GM10248 (cell line): ENCODE measurements at regions of chr17 and their contacts with region 1.

Region 1: DNA sequence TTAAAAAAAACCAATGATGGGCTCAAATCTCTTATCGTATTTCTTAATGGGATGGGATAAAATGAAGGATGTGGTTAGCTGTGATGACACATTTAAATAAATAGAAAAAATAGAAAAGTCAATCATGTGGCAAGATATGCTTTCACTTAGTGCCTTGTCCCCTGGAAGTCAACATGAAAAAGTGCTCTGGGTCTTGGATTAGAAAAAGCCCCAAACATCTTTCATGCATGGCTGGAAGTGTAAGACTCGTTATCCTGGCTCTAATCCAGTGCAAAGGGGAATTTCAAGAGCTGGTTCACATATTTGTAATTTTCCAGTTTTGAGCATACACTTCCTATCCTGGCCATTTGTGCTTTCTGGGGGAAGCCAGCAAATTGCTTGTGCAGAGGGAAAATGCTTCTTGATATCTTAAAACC is 160.9 kb downstream of the MAP2K6 start:
- DNase-seq: no peak
- CTCF ChIP-seq: no peak

Region 2: GRCh38 chr17:69560987-69561441 is 14.3 kb before region 1 on chr17:
- CTCF ChIA-PET with region 1: interaction called, 36 read pairs
- POLR2A ChIA-PET with region 1: no interaction called
- DNase-seq: no peak
- CTCF ChIP-seq: no peak

Region 3: DNA sequence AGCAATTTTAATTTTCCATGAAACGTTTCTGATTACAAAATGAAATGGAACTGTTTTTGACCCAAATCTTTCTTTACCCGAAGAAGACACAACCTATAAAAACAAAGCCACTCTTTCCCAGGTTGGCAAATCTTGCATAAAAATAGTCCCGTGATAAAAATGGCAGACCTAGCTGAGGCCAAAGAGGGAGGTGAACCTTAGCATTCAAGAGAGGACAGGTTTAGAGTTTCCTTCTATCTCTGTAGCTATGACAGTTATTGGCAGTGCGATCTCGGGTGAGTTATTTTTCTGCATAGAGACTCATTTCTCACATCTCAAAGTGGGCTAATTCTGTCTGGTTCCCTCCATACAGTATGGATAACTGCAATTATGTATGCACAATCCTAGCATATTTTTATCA is 80.5 kb after region 1 on chr17:
- CTCF ChIA-PET with region 1: no interaction called
- POLR2A ChIA-PET with region 1: no interaction called
- DNase-seq: no peak
- CTCF ChIP-seq: no peak

Region 4: GRCh38 chr17:70552230-70552981 is 977.1 kb after region 1 on chr17:
- CTCF ChIA-PET with region 1: interaction called, 29 read pairs
- POLR2A ChIA-PET with region 1: no interaction called
- DNase-seq: peak; percentile 41
- CTCF ChIP-seq: peak; percentile 44